Mammary epithelial cell (primary cell): ENCODE measurements at regions of chr16 and their contacts with region 1.

Region 1: GRCh38 chr16:30893744-30894539 is at the start of gene BCL7C:
- DNase-seq: peak; percentile 87
- H3K4me3 ChIP-seq: peak within 1 kb of the TSS; percentile 54 to 86 (median 81)
- H3K27ac ChIP-seq: peak within 1 kb of the TSS; percentile 33
- H3K4me1 ChIP-seq: peaks cover 38% of the 10 kb centered on the region
- H3K27me3 ChIP-seq: no peaks in the 10 kb centered on the region
- CTCF ChIP-seq: peak; percentile 4 to 54
- total RNA-seq, gene BCL7C: 26.1 to 28.5 TPM

Region 2: DNA sequence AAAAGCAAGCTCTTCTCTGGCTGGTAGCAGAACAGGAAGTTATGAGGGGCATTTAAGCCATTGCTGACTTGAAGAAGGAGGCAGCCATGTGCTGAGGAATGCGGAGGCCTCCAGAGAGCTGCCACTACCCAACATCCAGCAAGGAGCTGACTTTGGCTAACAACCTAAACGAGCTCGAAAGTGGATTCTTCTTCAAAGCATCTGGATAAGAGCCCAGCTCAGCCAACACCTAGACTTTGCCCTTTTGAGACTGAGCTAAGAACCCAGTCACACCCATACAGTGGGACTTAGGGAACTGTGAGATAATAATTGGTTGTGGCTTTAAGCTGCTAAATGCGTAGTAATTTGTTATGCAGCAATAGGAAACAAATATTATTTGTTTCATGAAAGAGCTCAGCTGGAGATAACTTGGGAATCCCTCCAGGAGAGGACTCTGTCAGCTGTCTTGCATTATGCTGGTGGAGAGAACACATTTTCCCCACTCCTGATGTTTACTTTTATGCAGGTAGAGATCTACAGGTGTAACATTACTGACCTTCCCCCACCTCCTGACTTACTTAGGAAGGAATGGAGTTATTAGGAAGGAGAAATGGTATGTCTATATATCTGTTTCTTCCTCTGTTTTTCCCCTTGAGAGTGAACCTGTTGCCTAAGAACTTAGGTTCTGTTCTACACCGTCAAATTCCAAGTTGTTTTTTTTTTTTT is 54.3 kb before region 1 on chr16:
- CTCF ChIA-PET with region 1: no interaction called
- dilution Hi-C with region 1: no loop called
- in situ Hi-C with region 1: no loop called
- intact Hi-C with region 1: loop called (anchors 1 kb)
- DNase-seq: no peak
- H3K4me3 ChIP-seq: no peak overlapping the region
- H3K27ac ChIP-seq: no peak overlapping the region
- H3K4me1 ChIP-seq: peaks cover 7% of the 10 kb centered on the region
- H3K27me3 ChIP-seq: no peaks in the 10 kb centered on the region
- CTCF ChIP-seq: no peak

Region 3: GRCh38 chr16:30844671-30845449 is 49.1 kb before region 1 on chr16:
- CTCF ChIA-PET with region 1: no interaction called
- dilution Hi-C with region 1: no loop called
- in situ Hi-C with region 1: loop called in 1 of 2 experiments (anchors 5 kb)
- intact Hi-C with region 1: loop called (anchors 1 kb)
- DNase-seq: peak; percentile 68
- H3K4me3 ChIP-seq: no peak overlapping the region
- H3K27ac ChIP-seq: no peak overlapping the region
- H3K4me1 ChIP-seq: no peaks in the 10 kb centered on the region
- H3K27me3 ChIP-seq: no peaks in the 10 kb centered on the region
- CTCF ChIP-seq: peak; percentile 88 to 93